CD4-positive, alpha-beta T cell (primary cell): ENCODE measurements at regions of chr15 and their contacts with region 1.

Region 1: DNA sequence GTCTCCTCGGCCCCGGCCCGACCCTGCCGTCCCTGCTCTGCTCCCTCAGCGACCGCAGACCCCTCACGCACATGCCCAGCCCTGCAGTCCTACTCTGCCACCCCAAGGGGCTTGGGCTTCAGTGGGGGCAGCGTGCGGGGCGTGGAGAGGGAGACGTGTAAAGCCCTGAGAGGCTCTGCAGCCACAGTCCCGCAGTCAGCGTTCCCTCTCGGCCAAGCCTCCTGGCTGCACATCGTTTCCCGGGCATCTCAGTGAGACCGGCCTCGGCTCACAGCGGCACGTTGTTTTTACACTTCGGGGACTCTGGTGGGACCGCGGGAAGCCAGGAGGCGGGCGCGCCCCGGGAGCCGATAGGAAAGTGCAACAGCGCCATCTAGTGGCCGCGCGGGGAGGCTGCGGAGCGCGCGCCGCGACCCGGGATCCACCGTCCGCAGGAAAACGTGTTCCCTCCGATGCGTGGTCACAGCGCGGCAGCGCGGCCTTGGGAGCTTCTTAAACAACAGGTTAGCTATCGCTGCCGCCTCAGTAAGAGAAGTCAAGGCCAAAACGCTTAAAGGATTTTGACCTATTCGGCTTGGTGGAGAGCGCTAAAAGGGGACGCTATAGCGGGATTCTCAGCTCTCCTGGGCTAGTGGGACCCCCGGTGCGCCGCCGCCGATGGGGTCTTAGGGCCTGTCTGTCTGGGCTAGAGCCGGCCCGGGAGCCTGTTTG is 226.8 kb upstream of the IGF1R start:
- DNase-seq: peak; percentile 27 to 75 (median 47)
- ATAC-seq: no peak
- H3K4me3 ChIP-seq: peak overlapping the region; percentile 41
- H3K4me3 Mint-ChIP-seq: no peak overlapping the region
- H3K27ac ChIP-seq: no peak overlapping the region
- H3K27ac Mint-ChIP-seq: no peak overlapping the region
- H3K4me1 ChIP-seq: peaks cover 13% of the 10 kb centered on the region
- H3K4me1 Mint-ChIP-seq: peaks cover 5% of the 10 kb centered on the region
- H3K27me3 ChIP-seq: peaks cover 26 to 42% of the 10 kb centered on the region in 2 experiments
- H3K27me3 Mint-ChIP-seq: peaks cover 63% of the 10 kb centered on the region
- CTCF ChIP-seq: peak; percentile 98

Region 2: GRCh38 chr15:97914711-97915110 is 506.9 kb before region 1 on chr15:
- CTCF ChIA-PET with region 1: no interaction called
- POLR2A ChIA-PET with region 1: no interaction called
- intact Hi-C with region 1: loop called (anchors 2 to 5 kb)
- DNase-seq: no peak
- ATAC-seq: no peak
- H3K4me3 ChIP-seq: no peak overlapping the region
- H3K4me3 Mint-ChIP-seq: no peak overlapping the region
- H3K27ac ChIP-seq: no peak overlapping the region
- H3K27ac Mint-ChIP-seq: no peak overlapping the region
- H3K4me1 ChIP-seq: no peaks in the 10 kb centered on the region
- H3K4me1 Mint-ChIP-seq: no peaks in the 10 kb centered on the region
- H3K27me3 ChIP-seq: no peaks in the 10 kb centered on the region
- H3K27me3 Mint-ChIP-seq: peaks cover 3% of the 10 kb centered on the region
- CTCF ChIP-seq: no peak

Region 3: GRCh38 chr15:98272625-98273024 is 148.9 kb before region 1 on chr15:
- CTCF ChIA-PET with region 1: no interaction called
- POLR2A ChIA-PET with region 1: no interaction called
- intact Hi-C with region 1: no loop called
- DNase-seq: no peak
- ATAC-seq: no peak
- H3K4me3 ChIP-seq: no peak overlapping the region
- H3K4me3 Mint-ChIP-seq: no peak overlapping the region
- H3K27ac ChIP-seq: no peak overlapping the region
- H3K27ac Mint-ChIP-seq: no peak overlapping the region
- H3K4me1 ChIP-seq: no peaks in the 10 kb centered on the region
- H3K4me1 Mint-ChIP-seq: no peaks in the 10 kb centered on the region
- H3K27me3 ChIP-seq: no peaks in the 10 kb centered on the region
- H3K27me3 Mint-ChIP-seq: peaks cover 12% of the 10 kb centered on the region
- CTCF ChIP-seq: no peak

Region 4: DNA sequence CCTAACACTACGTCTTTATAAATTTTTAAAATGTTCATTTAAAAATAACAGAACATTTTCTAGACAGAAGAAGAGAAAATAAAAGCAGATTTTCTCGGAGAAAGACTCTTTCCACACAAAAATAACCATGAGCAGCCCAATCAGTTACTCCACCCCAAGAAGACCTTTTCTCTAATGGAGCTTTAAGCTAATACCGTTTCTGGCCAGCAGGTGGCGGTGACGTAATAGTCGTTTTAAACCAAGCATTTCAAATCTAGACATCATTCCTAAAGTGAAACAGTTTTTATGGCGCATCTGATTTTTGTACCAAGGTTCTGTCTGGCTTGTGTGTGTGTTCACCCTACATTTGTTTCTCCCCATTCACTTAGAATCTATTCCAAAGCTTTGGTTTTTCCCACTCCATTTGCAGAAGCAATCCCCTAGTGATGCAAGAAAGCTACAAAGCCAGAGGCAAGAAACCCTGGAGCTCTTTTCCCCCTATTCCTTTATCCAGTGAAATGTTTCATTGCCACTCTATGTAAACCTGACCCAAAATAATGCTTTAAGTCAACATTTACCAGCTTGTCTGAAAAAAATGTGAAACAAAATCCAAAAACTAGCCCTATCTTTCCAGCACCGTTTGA is 109.9 kb before region 1 on chr15:
- CTCF ChIA-PET with region 1: no interaction called
- POLR2A ChIA-PET with region 1: no interaction called
- intact Hi-C with region 1: loop called (anchors 1 to 2 kb)
- DNase-seq: peak; percentile 23 to 72 (median 57)
- ATAC-seq: no peak
- H3K4me3 ChIP-seq: no peak overlapping the region
- H3K4me3 Mint-ChIP-seq: no peak overlapping the region
- H3K27ac ChIP-seq: no peak overlapping the region
- H3K27ac Mint-ChIP-seq: no peak overlapping the region
- H3K4me1 ChIP-seq: peaks cover 2% of the 10 kb centered on the region
- H3K4me1 Mint-ChIP-seq: no peaks in the 10 kb centered on the region
- H3K27me3 ChIP-seq: no peaks in the 10 kb centered on the region
- H3K27me3 Mint-ChIP-seq: peaks cover 31% of the 10 kb centered on the region
- CTCF ChIP-seq: peak; percentile 88